H1 (cell line): ENCODE measurements at regions of chr18 and their contacts with region 1.

Region 1: DNA sequence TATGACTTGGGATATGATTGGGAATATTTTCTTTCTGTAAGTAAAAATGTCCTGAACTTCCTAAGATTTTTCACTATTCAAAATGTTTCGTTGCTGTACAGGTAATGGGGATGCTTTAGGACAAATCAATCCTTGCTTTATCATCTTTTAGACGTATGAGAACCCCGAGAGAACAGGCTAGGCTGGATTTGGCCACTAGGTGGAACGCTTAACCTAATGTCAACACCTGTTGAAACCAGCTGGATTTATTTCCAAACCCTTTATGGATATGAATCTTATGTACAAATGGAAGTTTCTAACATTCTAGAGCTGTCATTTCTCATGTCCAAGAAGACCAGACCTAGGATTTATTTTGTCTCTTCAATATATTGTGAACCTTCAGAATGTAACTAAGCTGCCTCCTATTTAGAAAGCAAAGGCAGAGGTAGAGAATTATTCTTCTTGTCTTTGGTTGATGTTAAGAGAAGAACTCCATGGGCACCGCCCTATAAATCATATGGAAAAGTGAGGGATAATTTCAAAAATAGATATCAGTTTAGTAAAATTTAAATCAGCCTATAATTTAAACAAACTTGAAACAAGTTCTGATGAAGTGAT is 96.7 kb downstream of the PMAIP1 start:
- DNase-seq: no peak
- H3K4me3 ChIP-seq: no peak overlapping the region
- H3K27ac ChIP-seq: no peak overlapping the region
- H3K4me1 ChIP-seq: no peaks in the 10 kb centered on the region
- H3K27me3 ChIP-seq: no peaks in the 10 kb centered on the region
- CTCF ChIP-seq: peak in 2 of 3 experiments; percentile 63 to 72; a peak in 3 of 4 replicates
- EP300 ChIP-seq: no peak
- POLR2A ChIP-seq: no peak
- RAD21 ChIP-seq: peak; percentile 81 to 86

Region 2: GRCh38 chr18:59980188-59980637 is 16.3 kb before region 1 on chr18:
- CTCF ChIA-PET with region 1: interaction called, 31 read pairs
- POLR2A ChIA-PET with region 1: no interaction called
- DNase-seq: no peak
- H3K4me3 ChIP-seq: no peak overlapping the region
- H3K27ac ChIP-seq: no peak overlapping the region
- H3K4me1 ChIP-seq: no peaks in the 10 kb centered on the region
- H3K27me3 ChIP-seq: no peaks in the 10 kb centered on the region
- CTCF ChIP-seq: no peak
- EP300 ChIP-seq: no peak
- POLR2A ChIP-seq: no peak; a peak in 1 of 3 replicates
- RAD21 ChIP-seq: no peak

Region 3: DNA sequence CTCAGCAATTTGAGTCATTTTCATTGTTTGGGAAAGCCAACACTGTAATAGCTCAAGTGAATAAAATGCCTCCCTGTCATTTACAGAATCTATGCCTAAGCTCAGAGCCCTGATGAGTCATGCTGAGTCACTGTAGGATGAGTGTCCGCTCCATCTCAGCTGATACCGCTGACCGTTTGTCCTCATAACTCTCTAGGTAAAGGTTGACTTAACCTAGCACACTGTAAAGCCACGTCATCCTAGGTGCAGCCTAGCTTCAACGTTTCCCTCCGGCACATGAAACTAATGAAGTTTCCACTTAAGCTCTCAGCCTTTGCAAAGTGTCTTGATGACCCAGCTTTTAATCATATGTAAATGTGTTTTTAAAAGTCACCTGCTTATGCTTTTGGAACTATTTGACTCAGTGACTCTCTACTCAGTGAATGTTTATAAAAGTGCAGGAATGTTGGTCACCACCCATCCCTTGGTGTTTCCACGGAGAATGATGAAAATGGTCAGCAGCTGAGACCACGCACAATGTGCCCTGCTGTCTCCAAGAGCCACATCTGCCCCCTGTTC is 57.4 kb after region 1 on chr18:
- CTCF ChIA-PET with region 1: no interaction called
- POLR2A ChIA-PET with region 1: no interaction called
- DNase-seq: no peak
- H3K4me3 ChIP-seq: no peak overlapping the region
- H3K27ac ChIP-seq: no peak overlapping the region
- H3K4me1 ChIP-seq: peaks cover 0 to 2% (median 0%) of the 10 kb centered on the region in 4 experiments; a peak in 1 of 7 replicates
- H3K27me3 ChIP-seq: no peaks in the 10 kb centered on the region
- CTCF ChIP-seq: no peak
- EP300 ChIP-seq: no peak
- POLR2A ChIP-seq: no peak
- RAD21 ChIP-seq: no peak

Region 4: DNA sequence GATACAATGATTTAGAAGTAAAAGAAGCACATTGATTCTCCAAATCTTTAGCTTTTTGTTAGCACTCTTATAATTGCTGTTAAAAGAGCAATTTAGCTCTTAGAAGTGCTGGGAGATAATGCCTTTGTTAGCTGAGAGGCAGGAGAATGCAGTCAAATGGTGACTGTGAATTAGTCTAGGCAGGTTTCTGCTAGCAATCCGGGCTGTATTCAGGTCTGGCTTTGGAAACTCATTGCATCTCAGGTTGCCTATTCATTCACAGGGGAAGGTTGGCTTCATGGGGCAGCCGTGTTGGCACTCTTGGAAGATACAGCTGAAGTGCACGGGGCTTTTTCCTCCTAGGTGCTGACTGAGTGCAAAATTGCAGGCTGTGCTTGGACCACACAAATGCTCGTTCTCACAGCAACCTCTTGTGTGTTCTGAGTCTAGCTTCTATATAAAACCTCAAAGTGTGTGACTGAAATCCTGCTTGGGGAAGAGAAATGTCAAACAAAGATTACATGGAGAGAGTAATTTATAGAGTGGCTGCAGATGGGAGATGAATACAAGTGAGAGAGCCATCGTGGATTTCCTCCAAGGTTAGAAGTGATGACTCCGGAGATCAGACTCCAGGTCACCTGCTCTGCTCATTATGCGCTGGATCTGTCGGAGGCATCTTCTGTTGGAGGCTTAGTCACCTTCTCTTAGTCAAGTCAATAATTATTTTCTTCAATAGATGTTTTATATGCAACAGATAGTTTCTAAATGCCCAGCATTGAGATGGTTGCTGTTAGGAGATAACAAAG is 71.2 kb after region 1 on chr18:
- CTCF ChIA-PET with region 1: interaction called, 10 read pairs
- POLR2A ChIA-PET with region 1: interaction called, 3 read pairs
- DNase-seq: no peak
- H3K4me3 ChIP-seq: peak overlapping the region in 1 of 4 experiments; percentile 7; a peak in 1 of 8 replicates
- H3K27ac ChIP-seq: 0 out of 2 replicates have a peak overlapping the region, but pooled peaks have one; percentile 25
- H3K4me1 ChIP-seq: peaks cover 2 to 9% (median 7%) of the 10 kb centered on the region in 4 experiments; a peak in 5 of 7 replicates
- H3K27me3 ChIP-seq: no peaks in the 10 kb centered on the region
- CTCF ChIP-seq: no peak
- EP300 ChIP-seq: no peak
- POLR2A ChIP-seq: no peak
- RAD21 ChIP-seq: no peak

Region 5: DNA sequence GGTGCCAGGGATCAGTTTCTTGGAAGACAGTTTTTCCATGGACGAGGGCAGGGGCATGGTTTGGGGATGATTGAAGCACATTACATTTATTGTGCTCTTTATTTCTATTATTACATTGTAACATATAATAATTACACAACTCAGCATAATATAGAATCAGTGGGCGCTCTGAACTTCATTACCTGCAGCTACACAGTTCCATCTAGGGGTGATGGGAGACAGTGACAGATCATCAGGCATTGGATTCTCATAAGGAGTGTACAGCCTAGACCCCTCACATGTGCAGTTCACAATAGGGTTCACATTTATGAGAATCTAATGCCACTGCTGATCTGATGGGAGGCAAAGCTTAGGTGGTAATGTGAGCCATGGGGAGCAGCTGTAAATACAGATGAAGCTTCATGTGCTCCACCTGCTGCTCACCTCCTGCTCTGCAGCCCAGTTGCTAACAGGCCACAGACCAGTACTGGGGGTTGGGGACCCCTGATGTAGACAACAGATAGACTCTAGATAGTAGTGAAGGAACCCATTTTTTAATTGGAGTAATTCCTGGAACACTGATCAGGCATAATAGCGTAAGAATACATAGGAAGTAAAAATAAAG is 417.6 kb after region 1 on chr18:
- CTCF ChIA-PET with region 1: interaction called, 19 read pairs
- POLR2A ChIA-PET with region 1: no interaction called
- DNase-seq: peak; percentile 3 to 57
- H3K4me3 ChIP-seq: no peak overlapping the region
- H3K27ac ChIP-seq: no peak overlapping the region
- H3K4me1 ChIP-seq: no peaks in the 10 kb centered on the region
- H3K27me3 ChIP-seq: no peaks in the 10 kb centered on the region
- CTCF ChIP-seq: peak; percentile 63 to 73 (median 72)
- EP300 ChIP-seq: no peak
- POLR2A ChIP-seq: no peak
- RAD21 ChIP-seq: peak; percentile 76 to 78